Right cardiac atrium (tissue), 5 donors: ENCODE measurements at regions of chr22 and their contacts with region 1.

Region 1: DNA sequence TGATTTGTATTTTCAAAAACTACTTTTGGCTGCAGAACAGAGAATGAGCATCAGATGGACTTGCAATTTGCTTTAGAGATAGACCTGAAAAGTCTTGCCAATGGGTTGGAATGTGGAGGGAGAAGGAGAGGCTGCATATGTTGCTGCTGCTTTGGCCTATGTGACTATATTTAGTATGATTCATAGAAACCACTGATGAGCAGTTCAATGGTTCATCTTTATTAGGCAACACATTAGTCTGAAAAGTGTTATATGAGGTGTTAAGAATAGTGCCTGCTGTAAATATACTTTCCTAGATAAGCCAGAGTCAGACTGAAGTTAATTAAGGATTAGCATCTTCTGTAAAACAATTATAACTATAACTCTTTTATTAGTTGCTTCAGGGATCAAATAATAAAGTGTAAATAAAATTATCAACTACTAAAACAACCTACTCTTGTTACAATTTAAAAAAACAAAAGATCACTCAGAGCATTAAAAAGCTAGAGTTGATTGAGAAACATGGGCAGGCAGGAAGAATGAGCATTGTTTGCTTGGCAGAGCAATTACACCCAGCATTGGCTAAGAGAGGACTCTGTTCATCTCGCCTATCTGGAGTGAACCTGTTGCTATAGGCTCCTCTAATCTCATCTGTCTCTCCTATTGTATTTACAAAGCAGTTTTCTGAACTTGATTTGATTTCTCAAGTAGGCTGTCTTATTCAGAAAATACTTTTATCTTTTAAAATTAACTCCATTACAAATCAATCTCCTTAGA is 36.3 kb downstream of the HORMAD2 start:
- DNase-seq: no peak
- ATAC-seq: no peak
- H3K4me3 ChIP-seq: no peak overlapping the region
- H3K27ac ChIP-seq: no peak overlapping the region
- H3K4me1 ChIP-seq: no peaks in the 10 kb centered on the region
- H3K27me3 ChIP-seq: no peaks in the 10 kb centered on the region

Region 2: GRCh38 chr22:30005213-30005857 is 111.2 kb before region 1 on chr22:
- intact Hi-C with region 1: no loop called
- DNase-seq: peak; percentile 58 to 90 (median 87)
- ATAC-seq: peak; percentile 78 to 86
- H3K4me3 ChIP-seq: no peak overlapping the region
- H3K27ac ChIP-seq: no peak overlapping the region
- H3K4me1 ChIP-seq: no peaks in the 10 kb centered on the region
- H3K27me3 ChIP-seq: no peaks in the 10 kb centered on the region

Region 3: GRCh38 chr22:30015846-30016245 is 100.7 kb before region 1 on chr22:
- intact Hi-C with region 1: no loop called
- DNase-seq: no peak
- ATAC-seq: no peak
- H3K4me3 ChIP-seq: no peak overlapping the region
- H3K27ac ChIP-seq: no peak overlapping the region
- H3K4me1 ChIP-seq: no peaks in the 10 kb centered on the region
- H3K27me3 ChIP-seq: no peaks in the 10 kb centered on the region

Region 4: GRCh38 chr22:30036656-30037055 is 79.9 kb before region 1 on chr22:
- intact Hi-C with region 1: no loop called
- DNase-seq: no peak
- ATAC-seq: peak in 1 of 2 donors; percentile 6
- H3K4me3 ChIP-seq: no peak overlapping the region
- H3K27ac ChIP-seq: no peak overlapping the region
- H3K4me1 ChIP-seq: no peaks in the 10 kb centered on the region
- H3K27me3 ChIP-seq: no peaks in the 10 kb centered on the region

Region 5: GRCh38 chr22:30178181-30179126 is 61.9 kb after region 1 on chr22:
- intact Hi-C with region 1: loop called in 1 of 4 experiments (anchors 10 kb)
- DNase-seq: no peak
- ATAC-seq: no peak
- H3K4me3 ChIP-seq: no peak overlapping the region
- H3K27ac ChIP-seq: no peak overlapping the region
- H3K4me1 ChIP-seq: peaks cover 1% of the 10 kb centered on the region
- H3K27me3 ChIP-seq: no peaks in the 10 kb centered on the region

Region 6: DNA sequence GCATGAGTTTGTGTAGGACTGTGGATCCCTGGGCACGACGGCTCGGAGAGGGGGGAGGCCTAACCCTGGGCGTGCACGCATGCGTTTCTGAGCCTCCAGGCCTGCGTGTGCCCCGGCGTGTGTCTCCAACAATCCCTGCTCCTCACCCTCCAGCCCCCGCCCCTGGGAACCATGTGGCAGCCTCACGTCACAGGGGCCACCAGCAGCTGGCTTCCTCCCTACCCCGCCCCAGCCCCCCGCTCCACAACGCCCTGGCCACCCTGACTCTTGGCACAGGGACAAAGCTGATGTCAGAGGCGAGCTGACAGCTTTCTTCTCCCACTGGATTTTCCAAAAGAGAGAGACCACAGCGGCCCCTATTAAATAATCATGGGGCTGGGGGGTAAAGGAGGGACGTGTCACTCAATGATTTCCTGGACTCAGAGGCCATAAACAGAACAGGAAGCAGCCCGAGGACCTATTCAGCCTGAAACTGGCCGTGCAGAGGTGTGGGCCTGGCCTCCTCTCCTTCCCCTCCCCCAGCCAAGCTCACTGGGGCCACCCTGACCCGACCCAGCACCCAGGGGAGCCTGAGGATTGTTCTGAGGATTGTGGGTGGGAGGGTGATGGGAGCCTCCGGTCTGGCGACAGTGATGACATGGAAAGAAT is 136.8 kb after region 1 on chr22:
- intact Hi-C with region 1: loop called in 1 of 4 experiments (anchors 5 kb)
- DNase-seq: peak; percentile 88 to 92 (median 90)
- ATAC-seq: peak; percentile 53 to 57
- H3K4me3 ChIP-seq: no peak overlapping the region
- H3K27ac ChIP-seq: no peak overlapping the region
- H3K4me1 ChIP-seq: no peaks in the 10 kb centered on the region
- H3K27me3 ChIP-seq: no peaks in the 10 kb centered on the region